Common myeloid progenitor, CD34-positive (primary cell): ENCODE measurements at regions of chr10 and their contacts with region 1.

Region 1: GRCh38 chr10:99620713-99621453 is 644 bp upstream of the SLC25A28 start:
- DNase-seq: peak; percentile 89 to 100 (median 93)
- H3K4me3 ChIP-seq: peak overlapping the region; percentile 53 to 100 (median 93)
- H3K27ac ChIP-seq: peak overlapping the region; percentile 82 to 89
- H3K4me1 ChIP-seq: peaks cover 22 to 55% (median 44%) of the 10 kb centered on the region in 4 experiments
- H3K27me3 ChIP-seq: no peaks in the 10 kb centered on the region

Region 2: GRCh38 chr10:99711129-99711719 is 90.3 kb after region 1 on chr10:
- CTCF ChIA-PET with region 1: interaction called, 48 read pairs
- POLR2A ChIA-PET with region 1: no interaction called
- DNase-seq: peak; percentile 80 to 92 (median 87)
- H3K4me3 ChIP-seq: no peak overlapping the region
- H3K27ac ChIP-seq: no peak overlapping the region
- H3K4me1 ChIP-seq: peaks cover 0 to 21% (median 11%) of the 10 kb centered on the region in 4 experiments
- H3K27me3 ChIP-seq: no peaks in the 10 kb centered on the region